Motor neuron (in vitro differentiated cells): ENCODE measurements at regions of chr10 and their contacts with region 1.

Region 1: DNA sequence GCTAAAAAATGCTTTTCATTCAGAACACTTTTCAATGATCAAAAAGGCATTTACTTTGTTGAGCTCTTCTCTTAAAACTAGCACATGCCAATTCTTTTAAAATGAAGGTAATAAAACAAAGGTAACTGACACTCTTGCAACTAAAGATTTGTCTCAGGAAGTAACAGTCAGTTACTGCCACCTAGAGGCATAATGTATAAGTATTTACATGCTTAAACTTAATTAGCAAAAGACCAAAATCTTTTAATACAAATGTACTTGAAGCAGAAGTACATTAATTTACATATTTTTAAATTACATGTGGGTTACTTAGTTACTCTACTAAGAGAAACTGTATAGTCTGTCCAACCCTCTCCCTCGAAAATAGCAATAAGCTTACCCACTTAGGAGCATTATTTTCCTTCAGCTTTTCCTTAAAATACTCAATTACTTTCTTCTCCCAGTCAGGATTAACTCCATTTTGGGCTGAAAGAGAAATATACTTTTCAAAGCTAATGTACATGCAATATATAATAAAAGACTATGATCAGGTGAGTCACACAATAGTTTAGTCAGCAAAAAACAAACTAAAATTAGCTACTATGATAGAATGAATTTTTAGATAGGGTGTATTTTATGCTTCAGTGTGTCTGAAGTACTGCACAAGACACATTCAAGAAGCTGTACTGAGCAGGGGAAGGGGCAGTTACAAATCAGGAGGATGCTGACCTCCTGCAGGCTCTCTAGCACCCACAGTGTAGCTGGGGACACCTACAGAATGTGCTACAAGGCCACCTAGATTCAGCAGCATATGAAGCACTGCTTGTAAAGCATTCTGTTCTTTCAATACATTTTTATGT is 13.0 kb downstream of the MCMBP start:
- ATAC-seq: peak in 3 of 8 experiments; percentile 29 to 57 (median 33)
- H3K4me3 ChIP-seq: no peak overlapping the region
- H3K27ac ChIP-seq: no peak overlapping the region
- H3K4me1 ChIP-seq: peaks cover 0 to 2% of the 10 kb centered on the region in 2 donors

Region 2: DNA sequence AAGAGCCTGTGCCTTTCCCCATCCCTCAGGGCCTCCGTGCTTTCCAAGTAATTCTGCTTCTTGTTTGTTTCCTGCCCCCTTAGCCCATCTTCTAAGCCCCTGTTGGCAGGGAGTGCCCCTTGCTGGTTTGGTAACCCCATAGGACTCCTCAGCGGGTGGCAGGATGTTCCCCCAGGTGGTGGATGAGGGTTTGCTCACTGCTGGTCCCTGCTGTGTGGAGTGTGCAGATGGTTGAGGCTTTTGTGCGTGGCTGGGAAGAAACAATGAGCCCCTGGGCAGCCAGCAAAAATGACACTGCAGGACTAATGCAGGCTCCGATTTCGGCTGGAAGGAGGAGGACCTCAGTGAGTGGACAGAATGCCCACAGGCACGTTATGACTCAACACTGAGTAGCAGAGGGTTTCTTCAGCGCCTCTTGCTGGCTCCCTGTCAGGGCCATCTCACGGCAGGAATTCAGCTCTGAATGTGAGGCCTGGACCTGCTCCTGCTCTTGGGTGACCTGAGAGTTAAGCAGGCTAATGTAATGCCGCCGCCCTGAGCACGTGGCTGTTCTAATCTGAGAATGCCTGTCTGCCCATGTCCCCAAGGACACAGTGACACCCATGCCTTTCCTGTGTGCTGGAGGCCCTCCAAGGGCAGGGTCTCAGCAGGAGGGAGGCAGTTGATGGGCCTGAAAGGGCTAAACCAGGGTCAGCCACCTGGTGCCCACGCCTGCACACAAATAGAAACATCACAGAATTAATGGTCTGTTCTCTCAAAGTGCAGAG is 191.9 kb before region 1 on chr10:
- in situ Hi-C with region 1: no loop called
- ATAC-seq: peak; percentile 81 to 92 (median 90)
- H3K4me3 ChIP-seq: no peak overlapping the region
- H3K27ac ChIP-seq: peak overlapping the region; percentile 75 to 85
- H3K4me1 ChIP-seq: peaks cover 27 to 33% of the 10 kb centered on the region in 2 donors

Region 3: DNA sequence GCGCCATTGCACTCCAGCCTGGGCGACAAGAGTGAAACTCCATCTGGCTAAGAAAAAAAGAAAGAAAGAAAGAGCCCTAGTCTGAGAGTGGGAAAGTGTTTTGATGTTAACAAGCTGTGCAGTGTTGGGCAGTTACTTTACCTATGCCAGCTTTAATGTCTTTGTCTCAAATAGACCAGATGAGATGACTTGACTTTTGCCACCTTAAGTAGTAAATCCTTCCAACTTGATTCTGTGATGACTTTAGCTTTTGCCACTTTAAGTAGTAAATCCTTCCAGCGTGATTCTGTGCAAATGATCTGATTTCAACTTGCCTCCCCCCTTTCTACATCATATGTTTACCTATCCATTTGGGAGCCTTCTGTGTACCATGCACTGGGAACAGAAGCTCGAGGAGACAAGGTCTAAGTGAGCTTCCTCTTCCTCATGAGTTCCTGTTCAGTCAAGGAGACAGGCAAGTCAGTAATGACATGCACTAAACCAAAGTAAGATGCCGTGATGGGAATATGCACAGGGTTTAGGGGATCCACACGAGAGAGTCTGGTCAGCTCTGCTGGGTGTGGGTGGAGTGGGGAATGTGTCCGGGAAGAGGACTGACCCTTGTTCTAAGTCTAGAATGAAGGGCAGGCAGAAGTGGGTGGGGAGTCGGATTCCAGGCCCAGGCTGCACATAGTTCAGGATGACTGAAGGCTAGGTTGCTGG is 116.5 kb before region 1 on chr10:
- in situ Hi-C with region 1: loop called in 1 of 9 experiments (anchors 10 kb)
- ATAC-seq: peak in 3 of 8 experiments; percentile 94 to 100 (median 100)
- H3K4me3 ChIP-seq: no peak overlapping the region
- H3K27ac ChIP-seq: no peak overlapping the region
- H3K4me1 ChIP-seq: peaks cover 2 to 4% of the 10 kb centered on the region in 2 donors

Region 4: DNA sequence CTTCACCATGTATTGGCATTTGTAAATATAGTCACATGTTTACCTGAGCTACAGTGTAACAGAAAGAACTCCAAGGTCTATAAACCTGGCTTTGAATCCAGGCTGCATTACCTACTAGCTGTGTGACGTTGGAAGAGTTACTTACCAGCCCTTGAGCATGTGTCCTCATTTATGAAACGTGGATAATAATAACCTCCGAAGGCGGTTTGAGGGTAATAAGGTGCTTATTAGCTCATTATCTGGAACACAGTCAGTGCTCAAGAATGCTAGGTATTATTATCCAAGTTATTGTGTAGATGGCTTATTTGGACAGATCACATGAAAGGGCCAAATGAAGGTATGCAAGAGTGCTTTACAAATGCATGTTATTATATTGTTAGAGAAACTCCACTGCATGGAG is 97.8 kb after region 1 on chr10:
- in situ Hi-C with region 1: no loop called
- ATAC-seq: no peak
- H3K4me3 ChIP-seq: no peak overlapping the region
- H3K27ac ChIP-seq: no peak overlapping the region
- H3K4me1 ChIP-seq: no peaks in the 10 kb centered on the region